Caki2 (cell line): ENCODE measurements at regions of chr1 and their contacts with region 1.

Region 1: GRCh38 chr1:94329986-94330385 is 88.2 kb upstream of the ABCD3 start:
- DNase-seq: peak; percentile 64

Region 2: GRCh38 chr1:94202241-94202640 is 127.7 kb before region 1 on chr1:
- in situ Hi-C with region 1: no loop called
- DNase-seq: no peak

Region 3: GRCh38 chr1:94247138-94248094 is 82.6 kb before region 1 on chr1:
- in situ Hi-C with region 1: loop called (anchors 10 kb)
- DNase-seq: peak; percentile 82